MCF 10A (cell line): ENCODE measurements at regions of chr6 and their contacts with region 1.

Region 1: DNA sequence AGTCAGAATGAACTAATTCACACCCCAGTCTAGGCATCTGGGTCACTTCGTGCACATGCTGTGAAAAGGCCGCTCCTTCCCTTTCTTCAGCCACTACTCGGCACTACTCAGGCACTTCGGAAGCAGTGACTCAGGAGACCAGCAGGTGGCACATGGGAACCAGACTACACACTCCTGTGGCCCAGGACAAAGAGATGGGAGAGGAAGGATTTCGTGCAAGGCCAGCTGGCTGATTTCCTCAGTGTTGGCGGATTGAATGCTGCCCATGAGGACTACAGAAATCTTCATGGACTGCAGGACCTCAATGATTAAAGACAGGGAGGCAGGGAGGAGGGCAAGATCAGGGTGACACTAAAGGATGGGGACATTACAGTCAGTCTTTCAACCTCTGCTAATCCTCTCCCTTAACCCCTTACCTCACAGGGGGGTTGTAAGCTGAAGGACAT is 117.8 kb upstream of the SPACA1 start:
- DNase-seq: peak; percentile 87
- H3K4me3 Mint-ChIP-seq: no peak overlapping the region
- H3K27ac Mint-ChIP-seq: peak overlapping the region; percentile 52
- H3K4me1 Mint-ChIP-seq: peaks cover 9% of the 10 kb centered on the region
- H3K27me3 Mint-ChIP-seq: no peaks in the 10 kb centered on the region
- CTCF ChIP-seq: peak; percentile 70

Region 2: GRCh38 chr6:87832025-87832825 is 97.6 kb before region 1 on chr6:
- CTCF ChIA-PET with region 1: interaction called, 16 read pairs
- POLR2A ChIA-PET with region 1: no interaction called
- intact Hi-C with region 1: loop called (anchors 5 kb)
- DNase-seq: peak; percentile 32
- H3K4me3 Mint-ChIP-seq: peak overlapping the region; percentile 75
- H3K27ac Mint-ChIP-seq: peak overlapping the region; percentile 76
- H3K4me1 Mint-ChIP-seq: no peaks in the 10 kb centered on the region
- H3K27me3 Mint-ChIP-seq: peaks cover 17% of the 10 kb centered on the region
- CTCF ChIP-seq: peak; percentile 6

Region 3: DNA sequence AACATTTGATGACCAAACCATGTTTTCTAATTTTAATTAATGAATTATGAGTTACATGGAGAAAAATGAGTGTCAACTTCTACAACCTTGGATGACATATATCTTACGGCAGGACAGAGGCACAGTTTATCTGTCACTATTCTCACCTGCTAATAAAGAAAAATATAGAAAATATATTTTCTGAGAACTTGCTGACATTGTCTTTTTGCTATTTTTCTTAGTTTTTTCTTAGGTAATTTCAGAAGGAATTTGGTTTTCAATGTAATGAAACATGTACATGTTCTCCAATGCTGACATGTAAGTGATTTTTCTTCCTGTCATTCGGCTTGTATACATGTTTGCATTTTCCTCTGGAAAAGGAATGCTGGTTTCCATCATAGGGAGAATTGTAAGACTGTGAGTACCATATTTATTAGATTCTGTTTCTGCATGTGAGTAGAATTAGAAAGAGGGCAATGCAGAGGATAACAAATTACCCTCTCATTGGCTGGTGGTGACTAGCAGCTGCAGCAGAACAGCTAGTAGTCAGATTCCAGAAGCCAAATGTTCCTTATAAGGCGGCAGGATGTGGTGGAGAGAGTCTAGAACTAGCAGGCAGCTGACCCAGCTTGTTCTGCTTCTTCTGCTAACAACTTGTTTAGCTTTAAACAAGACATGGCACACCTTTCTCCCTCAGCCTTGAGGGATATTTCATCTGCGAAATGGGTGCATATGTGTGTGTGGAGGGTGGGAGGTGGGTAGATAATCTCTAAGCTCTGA is 15.1 kb before region 1 on chr6:
- CTCF ChIA-PET with region 1: interaction called, 19 read pairs
- POLR2A ChIA-PET with region 1: no interaction called
- intact Hi-C with region 1: no loop called
- DNase-seq: no peak
- H3K4me3 Mint-ChIP-seq: no peak overlapping the region
- H3K27ac Mint-ChIP-seq: no peak overlapping the region
- H3K4me1 Mint-ChIP-seq: peaks cover 2% of the 10 kb centered on the region
- H3K27me3 Mint-ChIP-seq: peaks cover 53% of the 10 kb centered on the region
- CTCF ChIP-seq: no peak

Region 4: GRCh38 chr6:88368071-88368787 is 438.4 kb after region 1 on chr6:
- CTCF ChIA-PET with region 1: no interaction called
- POLR2A ChIA-PET with region 1: no interaction called
- intact Hi-C with region 1: no loop called
- DNase-seq: peak; percentile 84
- H3K4me3 Mint-ChIP-seq: peak overlapping the region; percentile 1
- H3K27ac Mint-ChIP-seq: peak overlapping the region; percentile 99
- H3K4me1 Mint-ChIP-seq: peaks cover 56% of the 10 kb centered on the region
- H3K27me3 Mint-ChIP-seq: no peaks in the 10 kb centered on the region
- CTCF ChIP-seq: no peak

Region 5: DNA sequence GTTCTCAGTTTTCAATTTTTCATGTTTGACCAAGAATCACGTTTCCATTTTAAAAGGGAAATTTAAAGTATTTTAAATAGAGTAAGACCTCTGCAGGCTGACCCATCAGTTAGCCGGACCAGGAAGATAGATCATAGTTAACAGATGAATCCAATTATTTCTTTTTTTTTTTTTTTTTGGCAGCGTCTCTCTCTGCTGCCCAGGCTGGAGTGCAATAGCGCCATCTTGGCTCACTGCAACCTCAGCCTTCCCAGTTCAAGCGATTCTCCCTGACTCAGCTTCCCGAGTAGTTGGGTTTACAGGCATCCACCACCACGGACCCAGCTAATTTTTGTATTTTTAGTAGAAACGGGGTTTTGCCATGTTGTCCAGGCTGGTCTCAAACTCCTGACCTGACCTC is 493.0 kb after region 1 on chr6:
- CTCF ChIA-PET with region 1: no interaction called
- POLR2A ChIA-PET with region 1: no interaction called
- intact Hi-C with region 1: loop called (anchors 5 kb)
- DNase-seq: peak; percentile 37
- H3K4me3 Mint-ChIP-seq: no peak overlapping the region
- H3K27ac Mint-ChIP-seq: no peak overlapping the region
- H3K4me1 Mint-ChIP-seq: no peaks in the 10 kb centered on the region
- H3K27me3 Mint-ChIP-seq: no peaks in the 10 kb centered on the region
- CTCF ChIP-seq: peak; percentile 20

Region 6: GRCh38 chr6:88492824-88493223 is 563.0 kb after region 1 on chr6:
- CTCF ChIA-PET with region 1: interaction called, 124 read pairs
- POLR2A ChIA-PET with region 1: interaction called, 4 read pairs
- intact Hi-C with region 1: loop called (anchors 1 kb)
- DNase-seq: peak; percentile 46
- H3K4me3 Mint-ChIP-seq: no peak overlapping the region
- H3K27ac Mint-ChIP-seq: no peak overlapping the region
- H3K4me1 Mint-ChIP-seq: peaks cover 23% of the 10 kb centered on the region
- H3K27me3 Mint-ChIP-seq: no peaks in the 10 kb centered on the region
- CTCF ChIP-seq: peak; percentile 64

Region 7: GRCh38 chr6:88870717-88871330 is 941.0 kb after region 1 on chr6:
- CTCF ChIA-PET with region 1: interaction called, 41 read pairs
- POLR2A ChIA-PET with region 1: no interaction called
- intact Hi-C with region 1: loop called (anchors 1 kb)
- DNase-seq: peak; percentile 73
- H3K4me3 Mint-ChIP-seq: no peak overlapping the region
- H3K27ac Mint-ChIP-seq: no peak overlapping the region
- H3K4me1 Mint-ChIP-seq: peaks cover 11% of the 10 kb centered on the region
- H3K27me3 Mint-ChIP-seq: no peaks in the 10 kb centered on the region
- CTCF ChIP-seq: peak; percentile 72